HEK293T (cell line): ENCODE measurements at regions of chr17 and their contacts with region 1.

Region 1: GRCh38 chr17:7035591-7036368 is at the start of gene SLC16A13:
- DNase-seq: peak; percentile 94

Region 2: GRCh38 chr17:7021993-7022778 is 13.6 kb before region 1 on chr17:
- CTCF ChIA-PET with region 1: interaction called, 5 read pairs
- POLR2A ChIA-PET with region 1: interaction called, 19 read pairs
- DNase-seq: peak; percentile 78

Region 3: DNA sequence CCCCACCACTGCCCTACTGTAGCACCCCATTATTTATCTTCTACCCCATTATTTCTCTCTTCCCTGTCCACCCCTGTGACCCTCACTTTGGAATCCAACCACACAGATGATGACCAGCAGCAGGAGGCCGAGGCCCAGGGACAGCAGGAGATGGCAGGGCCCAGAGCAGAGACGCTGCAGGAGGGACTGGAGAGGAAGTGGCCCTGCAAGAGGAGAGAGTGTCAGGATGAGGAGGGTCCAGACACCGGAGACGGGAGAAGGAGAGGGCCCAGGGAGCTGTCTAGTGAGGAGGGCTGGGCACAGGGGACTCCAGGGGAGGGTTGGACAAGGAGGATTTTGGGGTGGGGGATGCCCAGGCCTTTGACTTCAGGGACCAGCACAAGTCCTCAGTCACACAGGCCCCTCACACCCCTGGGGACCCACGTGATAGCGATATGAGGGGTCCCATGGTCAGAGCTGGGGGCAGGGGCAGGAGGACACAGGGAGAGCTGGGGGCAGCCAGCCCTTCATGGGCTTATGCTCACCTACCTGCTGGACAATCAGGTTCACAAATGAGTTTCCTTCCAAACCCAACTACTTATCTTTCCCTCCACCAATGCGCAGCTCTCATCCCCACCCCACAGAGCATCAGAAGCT is 42.2 kb after region 1 on chr17:
- CTCF ChIA-PET with region 1: no interaction called
- POLR2A ChIA-PET with region 1: no interaction called
- DNase-seq: no peak